Left cardiac atrium (tissue), 4 donors: ENCODE measurements at regions of chr20 and their contacts with region 1.

Region 1: GRCh38 chr20:16476032-16476431 is 97.2 kb downstream of the KIF16B start:
- DNase-seq: no peak
- ATAC-seq: peak; percentile 74 to 75

Region 2: DNA sequence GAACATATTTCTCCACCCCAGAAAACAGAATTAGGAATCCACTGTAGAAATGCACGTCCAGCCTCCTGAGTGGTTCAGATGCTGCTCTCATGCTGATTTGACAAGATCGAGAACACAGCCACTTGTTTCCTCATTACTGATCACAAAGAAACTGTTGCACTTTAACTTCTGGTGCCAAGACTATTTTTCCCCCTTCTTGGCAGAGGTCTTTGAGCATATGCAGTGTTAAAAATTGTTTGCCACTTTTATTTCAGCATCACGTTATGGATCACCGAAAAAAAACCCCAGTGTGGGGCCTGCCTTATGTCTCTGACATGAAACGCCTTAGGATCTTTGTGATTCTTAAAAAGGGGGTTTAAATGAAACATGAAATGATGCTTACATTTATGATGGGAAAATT is 969.7 kb before region 1 on chr20:
- intact Hi-C with region 1: loop called in 1 of 2 experiments (anchors 5 kb)
- DNase-seq: no peak
- ATAC-seq: no peak

Region 3: GRCh38 chr20:15708984-15709598 is 766.9 kb before region 1 on chr20:
- intact Hi-C with region 1: loop called in 1 of 2 experiments (anchors 10 kb)
- DNase-seq: peak; percentile 33
- ATAC-seq: peak in 1 of 2 donors; percentile 47

Region 4: DNA sequence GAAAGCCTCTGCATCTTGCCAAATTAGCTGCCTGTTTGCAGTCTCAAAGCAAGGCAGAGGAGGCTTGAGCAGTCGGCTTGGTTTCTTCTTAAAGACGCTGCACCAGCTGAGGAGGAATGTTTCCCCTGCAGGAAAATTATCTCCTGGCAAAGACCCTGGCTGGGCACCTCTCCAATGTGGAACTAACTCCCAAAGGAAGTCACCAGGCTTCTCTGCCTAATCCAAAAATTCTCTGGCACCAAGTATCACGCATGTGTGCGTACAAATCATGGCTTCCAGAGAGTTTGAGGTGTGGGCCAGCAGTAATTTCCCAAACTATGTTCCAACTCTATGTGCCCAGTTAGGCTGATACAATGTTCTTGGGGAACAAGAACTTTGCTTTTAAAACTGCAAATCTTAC is 78.9 kb before region 1 on chr20:
- intact Hi-C with region 1: no loop called
- DNase-seq: peak; percentile 71
- ATAC-seq: peak; percentile 71 to 92

Region 5: GRCh38 chr20:16729565-16730456 is 253.8 kb after region 1 on chr20 and contains the start of gene SNRPB2:
- intact Hi-C with region 1: no loop called
- DNase-seq: peak; percentile 96
- ATAC-seq: peak; percentile 98 to 100
- total RNA-seq, gene SNRPB2: 31.0 to 36.5 TPM